PC-9 (cell line): ENCODE measurements at regions of chr11 and their contacts with region 1.

Region 1: DNA sequence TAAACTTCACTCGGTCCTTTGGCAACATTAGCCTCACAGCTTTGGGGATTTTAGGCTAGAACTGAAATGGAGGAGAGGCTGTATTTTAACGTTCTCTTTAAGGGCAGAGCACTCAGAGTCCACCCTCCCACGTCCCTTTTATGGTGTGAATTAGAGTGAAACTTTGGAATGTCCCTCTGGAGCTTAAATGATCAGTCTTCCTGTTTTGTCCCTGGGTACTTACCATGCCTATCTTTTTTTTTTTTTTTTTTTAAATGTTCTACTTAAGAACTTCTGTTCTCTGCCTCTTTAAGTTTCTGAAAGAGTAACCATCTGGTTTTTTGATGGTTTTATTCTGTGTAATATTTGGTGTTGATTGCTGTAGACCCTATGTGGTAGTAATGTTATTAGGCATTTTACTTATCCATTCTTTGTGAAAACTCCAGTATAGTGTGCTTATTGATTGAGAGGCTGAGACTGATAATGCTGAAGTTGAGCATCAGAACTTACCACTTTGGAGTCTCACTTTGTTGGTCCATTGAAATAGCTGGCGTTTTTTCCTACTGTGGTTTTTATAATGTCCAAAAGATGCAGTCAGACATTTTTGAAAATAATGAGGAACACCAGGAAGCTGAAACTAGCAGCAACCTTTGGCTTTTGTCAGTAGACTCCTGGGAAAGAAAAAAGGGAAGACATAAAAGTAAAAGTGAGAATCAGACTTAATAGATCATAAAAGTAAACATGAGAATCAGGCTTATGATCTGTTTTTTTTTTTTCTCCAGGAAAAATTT is 11.6 kb downstream of the UVRAG start:
- DNase-seq: no peak
- H3K4me3 ChIP-seq: no peak overlapping the region
- H3K27ac ChIP-seq: peak overlapping the region; percentile 23; the same call in 1 of the 2 replicates
- H3K4me1 ChIP-seq: no peaks in the 10 kb centered on the region
- H3K27me3 ChIP-seq: no peaks in the 10 kb centered on the region
- CTCF ChIP-seq: no peak

Region 2: GRCh38 chr11:76339221-76339620 is 512.6 kb after region 1 on chr11:
- CTCF ChIA-PET with region 1: interaction called, 13 read pairs
- POLR2A ChIA-PET with region 1: no interaction called
- intact Hi-C with region 1: no loop called
- DNase-seq: no peak
- H3K4me3 ChIP-seq: no peak overlapping the region
- H3K27ac ChIP-seq: no peak overlapping the region
- H3K4me1 ChIP-seq: no peaks in the 10 kb centered on the region
- H3K27me3 ChIP-seq: no peaks in the 10 kb centered on the region
- CTCF ChIP-seq: no peak

Region 3: DNA sequence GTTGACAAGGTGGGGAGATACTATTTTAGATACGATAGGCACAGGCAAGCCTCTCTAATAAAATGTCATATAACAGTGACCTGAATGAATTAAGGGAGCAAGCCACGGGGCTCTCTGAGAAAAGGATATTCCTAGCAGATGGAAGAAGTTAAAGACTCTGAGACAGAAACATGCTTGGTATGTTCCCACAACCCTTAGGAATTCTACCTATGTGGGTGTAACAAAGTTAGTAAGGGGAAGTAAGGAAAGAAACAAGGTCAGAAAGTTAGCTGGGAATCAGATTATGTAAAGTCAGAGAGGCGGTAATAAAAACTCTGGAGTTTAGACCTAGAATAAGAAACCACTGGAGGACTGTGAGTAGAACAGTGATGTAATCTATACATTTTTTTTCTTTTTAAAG is 1534.5 kb after region 1 on chr11:
- CTCF ChIA-PET with region 1: interaction called, 10 read pairs
- POLR2A ChIA-PET with region 1: no interaction called
- intact Hi-C with region 1: no loop called
- DNase-seq: peak in 1 of 2 experiments; percentile 58
- H3K4me3 ChIP-seq: no peak overlapping the region
- H3K27ac ChIP-seq: no peak overlapping the region
- H3K4me1 ChIP-seq: no peaks in the 10 kb centered on the region
- H3K27me3 ChIP-seq: no peaks in the 10 kb centered on the region
- CTCF ChIP-seq: no peak